PC-9 (cell line): ENCODE measurements at regions of chr2 and their contacts with region 1.

Region 1: GRCh38 chr2:218618102-218618860 is 10.6 kb downstream of the PLCD4 start:
- DNase-seq: no peak
- H3K4me3 ChIP-seq: no peak overlapping the region
- H3K27ac ChIP-seq: no peak overlapping the region
- H3K4me1 ChIP-seq: no peaks in the 10 kb centered on the region
- H3K27me3 ChIP-seq: no peaks in the 10 kb centered on the region
- CTCF ChIP-seq: no peak

Region 2: DNA sequence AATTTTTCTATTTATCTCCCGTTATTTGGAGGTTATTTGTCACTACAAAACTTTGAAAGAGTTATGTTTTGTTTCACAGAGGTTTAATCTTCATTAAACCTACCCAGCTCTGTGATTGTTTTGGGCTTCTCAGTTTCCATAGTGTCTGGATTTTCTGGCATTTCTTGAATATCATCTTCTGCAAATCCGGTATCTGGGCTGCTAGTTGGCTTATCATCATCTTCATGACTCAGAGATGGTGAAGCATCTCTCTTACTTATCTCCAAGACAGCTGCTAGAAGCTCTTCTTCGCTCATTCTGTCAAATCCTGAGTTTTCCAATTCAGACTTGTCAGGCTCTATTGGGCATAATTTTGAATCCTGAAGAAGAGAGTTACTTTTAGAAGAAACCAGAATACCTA is 143.8 kb before region 1 on chr2:
- CTCF ChIA-PET with region 1: interaction called, 10 read pairs
- POLR2A ChIA-PET with region 1: no interaction called
- intact Hi-C with region 1: no loop called
- DNase-seq: no peak
- H3K4me3 ChIP-seq: no peak overlapping the region
- H3K27ac ChIP-seq: no peak overlapping the region
- H3K4me1 ChIP-seq: no peaks in the 10 kb centered on the region
- H3K27me3 ChIP-seq: no peaks in the 10 kb centered on the region
- CTCF ChIP-seq: no peak

Region 3: GRCh38 chr2:218540015-218540414 is 78.3 kb before region 1 on chr2:
- CTCF ChIA-PET with region 1: no interaction called
- POLR2A ChIA-PET with region 1: no interaction called
- intact Hi-C with region 1: no loop called
- DNase-seq: no peak
- H3K4me3 ChIP-seq: no peak overlapping the region
- H3K27ac ChIP-seq: no peak overlapping the region
- H3K4me1 ChIP-seq: no peaks in the 10 kb centered on the region
- H3K27me3 ChIP-seq: no peaks in the 10 kb centered on the region
- CTCF ChIP-seq: no peak